AG04449 (cell line): ENCODE measurements at regions of chr5 and their contacts with region 1.

Region 1: GRCh38 chr5:155943516-155944407 is 383.2 kb upstream of the SGCD start:
- DNase-seq: no peak
- H3K4me3 ChIP-seq: no peak overlapping the region
- CTCF ChIP-seq: peak; percentile 90

Region 2: GRCh38 chr5:155954701-155955445 is 11.1 kb after region 1 on chr5:
- CTCF ChIA-PET with region 1: interaction called, 20 read pairs
- POLR2A ChIA-PET with region 1: no interaction called
- DNase-seq: peak; percentile 34
- H3K4me3 ChIP-seq: no peak overlapping the region
- CTCF ChIP-seq: no peak

Region 3: GRCh38 chr5:156241266-156241665 is 297.5 kb after region 1 on chr5:
- CTCF ChIA-PET with region 1: no interaction called
- POLR2A ChIA-PET with region 1: no interaction called
- DNase-seq: no peak
- H3K4me3 ChIP-seq: no peak overlapping the region
- CTCF ChIP-seq: no peak

Region 4: GRCh38 chr5:156815988-156816599 is 872.3 kb after region 1 on chr5:
- CTCF ChIA-PET with region 1: interaction called, 30 read pairs
- POLR2A ChIA-PET with region 1: no interaction called
- DNase-seq: no peak
- H3K4me3 ChIP-seq: no peak overlapping the region
- CTCF ChIP-seq: peak; percentile 52